ENCODE measurements at regions of chr21 and their contacts with region 1.

Region 1: GRCh38 chr21:28745131-28746016 is 247.3 kb downstream of the LTN1 start:
- DNase-seq: peak; percentile 84
- ATAC-seq: peak; percentile 90
- H3K4me3 Mint-ChIP-seq: no peak overlapping the region
- H3K27ac Mint-ChIP-seq: no peak overlapping the region
- H3K4me1 Mint-ChIP-seq: no peaks in the 10 kb centered on the region
- H3K27me3 Mint-ChIP-seq: no peaks in the 10 kb centered on the region

Region 2: GRCh38 chr21:27700974-27701614 is 1044.3 kb before region 1 on chr21:
- CTCF ChIA-PET with region 1: interaction called, 19 read pairs
- POLR2A ChIA-PET with region 1: no interaction called
- intact Hi-C with region 1: loop called (anchors 1 to 5 kb)
- DNase-seq: peak; percentile 83
- ATAC-seq: peak; percentile 69
- H3K4me3 Mint-ChIP-seq: no peak overlapping the region
- H3K27ac Mint-ChIP-seq: no peak overlapping the region
- H3K4me1 Mint-ChIP-seq: no peaks in the 10 kb centered on the region
- H3K27me3 Mint-ChIP-seq: peaks cover 5% of the 10 kb centered on the region

Region 3: DNA sequence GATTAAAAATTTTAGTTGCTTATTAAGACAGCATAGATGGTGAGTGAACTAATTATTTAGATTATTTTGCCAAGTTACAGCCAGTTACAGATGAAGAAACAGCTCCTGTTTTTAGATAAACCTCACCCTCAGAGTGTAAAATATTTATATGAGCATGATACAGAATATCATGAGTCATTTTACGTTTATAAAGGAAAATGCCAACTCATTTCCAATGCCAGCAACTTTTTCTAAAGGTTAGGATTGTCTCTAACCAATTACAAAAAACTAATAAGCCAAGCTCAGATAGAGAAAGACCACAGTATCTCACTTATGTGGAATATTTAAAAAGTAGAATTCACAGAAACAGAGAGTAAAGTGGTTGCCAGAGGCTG is 342.8 kb before region 1 on chr21:
- CTCF ChIA-PET with region 1: no interaction called
- POLR2A ChIA-PET with region 1: no interaction called
- intact Hi-C with region 1: no loop called
- DNase-seq: no peak
- ATAC-seq: no peak
- H3K4me3 Mint-ChIP-seq: no peak overlapping the region
- H3K27ac Mint-ChIP-seq: no peak overlapping the region
- H3K4me1 Mint-ChIP-seq: no peaks in the 10 kb centered on the region
- H3K27me3 Mint-ChIP-seq: no peaks in the 10 kb centered on the region

Region 4: GRCh38 chr21:28516991-28517592 is 228.3 kb before region 1 on chr21:
- CTCF ChIA-PET with region 1: interaction called, 153 read pairs
- POLR2A ChIA-PET with region 1: no interaction called
- intact Hi-C with region 1: loop called (anchors 1 kb)
- DNase-seq: peak; percentile 80
- ATAC-seq: peak; percentile 97
- H3K4me3 Mint-ChIP-seq: no peak overlapping the region
- H3K27ac Mint-ChIP-seq: no peak overlapping the region
- H3K4me1 Mint-ChIP-seq: no peaks in the 10 kb centered on the region
- H3K27me3 Mint-ChIP-seq: no peaks in the 10 kb centered on the region

Region 5: DNA sequence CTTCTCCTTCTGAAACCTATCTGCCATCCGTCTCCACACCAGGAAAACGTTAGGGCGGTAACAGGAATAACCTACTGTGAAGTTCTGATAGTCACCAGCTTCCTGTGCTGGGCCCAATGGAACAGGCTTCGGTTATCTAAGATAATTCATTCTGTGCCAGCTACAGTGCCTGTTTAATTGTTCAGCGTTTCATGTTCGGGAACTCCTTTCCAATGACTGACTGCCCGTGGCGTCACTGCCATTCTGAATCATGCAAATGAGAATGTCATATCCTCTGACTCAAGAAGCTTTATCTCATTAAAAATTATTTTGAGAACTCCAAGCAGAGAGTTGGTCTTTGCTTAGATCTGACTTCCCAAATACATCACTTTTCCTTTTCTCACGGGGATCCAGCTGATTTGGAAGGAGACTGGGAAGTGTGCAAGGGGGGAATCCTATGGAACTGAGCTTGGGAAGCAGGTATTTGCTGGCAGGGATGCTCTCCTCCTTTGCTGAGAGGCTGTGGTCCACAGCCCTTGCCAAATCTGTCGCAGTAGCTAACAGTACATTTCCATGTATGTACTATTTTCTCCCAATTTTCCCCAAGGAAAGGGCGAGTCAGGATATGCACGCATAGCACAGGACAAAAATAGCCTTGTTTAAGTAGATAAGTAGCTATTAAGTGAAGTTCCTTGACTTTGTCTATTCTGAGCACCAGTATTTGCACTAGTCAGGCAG is 111.4 kb before region 1 on chr21:
- CTCF ChIA-PET with region 1: interaction called, 10 read pairs
- POLR2A ChIA-PET with region 1: no interaction called
- intact Hi-C with region 1: no loop called
- DNase-seq: peak; percentile 49
- ATAC-seq: peak; percentile 50
- H3K4me3 Mint-ChIP-seq: no peak overlapping the region
- H3K27ac Mint-ChIP-seq: no peak overlapping the region
- H3K4me1 Mint-ChIP-seq: peaks cover 19% of the 10 kb centered on the region
- H3K27me3 Mint-ChIP-seq: no peaks in the 10 kb centered on the region

Region 6: DNA sequence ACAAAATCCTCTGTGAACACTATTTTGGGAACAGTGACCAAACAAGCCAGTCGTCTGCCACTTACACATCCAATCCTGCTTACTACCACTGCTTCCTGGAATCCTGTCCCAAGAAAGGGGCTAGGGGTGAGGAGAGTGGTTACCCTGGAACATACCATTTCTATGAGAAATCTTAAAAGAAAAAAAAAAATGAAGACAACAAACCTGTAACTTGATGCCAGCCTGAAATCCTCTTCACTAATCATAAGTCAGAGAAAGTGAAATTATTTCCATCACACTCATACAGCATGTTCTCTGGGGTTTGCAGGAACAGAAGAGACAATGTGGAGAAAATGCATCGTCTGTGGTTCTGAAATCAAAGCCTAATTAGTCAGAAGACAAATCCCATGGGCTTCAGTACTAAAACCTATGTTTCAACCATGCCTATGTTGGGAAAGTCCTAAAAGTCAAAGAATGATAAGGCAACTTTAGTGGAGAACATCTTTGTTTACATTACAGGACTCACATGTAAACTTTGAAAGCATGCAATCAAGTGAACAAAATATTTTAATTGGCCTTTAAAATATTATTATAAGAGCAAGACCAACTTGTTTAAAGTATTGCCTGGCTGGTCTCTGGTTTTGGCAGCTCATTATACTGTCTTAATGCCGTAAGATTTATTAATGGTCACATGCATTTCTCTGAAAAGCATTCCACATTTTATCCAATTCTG is 26.6 kb after region 1 on chr21:
- CTCF ChIA-PET with region 1: interaction called, 24 read pairs
- POLR2A ChIA-PET with region 1: no interaction called
- intact Hi-C with region 1: no loop called
- DNase-seq: no peak
- ATAC-seq: peak; percentile 27
- H3K4me3 Mint-ChIP-seq: no peak overlapping the region
- H3K27ac Mint-ChIP-seq: peak overlapping the region; percentile 55
- H3K4me1 Mint-ChIP-seq: peaks cover 57% of the 10 kb centered on the region
- H3K27me3 Mint-ChIP-seq: no peaks in the 10 kb centered on the region

Measured in activated CD4-positive, alpha-beta T cell treated with anti-CD3 and anti-CD28 coated beads for 36 hours (primary cell).